Heart left ventricle (tissue), 16 donors: ENCODE measurements at regions of chr12 and their contacts with region 1.

Region 1: GRCh38 chr12:40911676-40912075 is 219.4 kb downstream of the CNTN1 start:
- DNase-seq: no peak
- ATAC-seq: no peak
- H3K4me3 ChIP-seq: no peak overlapping the region
- H3K27ac ChIP-seq: no peak overlapping the region
- H3K4me1 ChIP-seq: no peaks in the 10 kb centered on the region
- H3K27me3 ChIP-seq: no peaks in the 10 kb centered on the region
- CTCF ChIP-seq: no peak
- POLR2A ChIP-seq: no peak

Region 2: GRCh38 chr12:40622246-40622838 is 289.3 kb before region 1 on chr12:
- intact Hi-C with region 1: loop called in 1 of 10 experiments (anchors 10 kb)
- DNase-seq: peak in 1 of 5 donors; percentile 31
- ATAC-seq: no peak
- H3K4me3 ChIP-seq: no peak overlapping the region
- H3K27ac ChIP-seq: no peak overlapping the region
- H3K4me1 ChIP-seq: no peaks in the 10 kb centered on the region
- H3K27me3 ChIP-seq: no peaks in the 10 kb centered on the region
- CTCF ChIP-seq: peak; percentile 35 to 69 (median 56)
- POLR2A ChIP-seq: no peak

Region 3: GRCh38 chr12:40788276-40788675 is 123.4 kb before region 1 on chr12:
- intact Hi-C with region 1: no loop called
- DNase-seq: no peak
- ATAC-seq: no peak
- H3K4me3 ChIP-seq: no peak overlapping the region
- H3K27ac ChIP-seq: no peak overlapping the region
- H3K4me1 ChIP-seq: no peaks in the 10 kb centered on the region
- H3K27me3 ChIP-seq: no peaks in the 10 kb centered on the region
- CTCF ChIP-seq: no peak
- POLR2A ChIP-seq: no peak

Region 4: DNA sequence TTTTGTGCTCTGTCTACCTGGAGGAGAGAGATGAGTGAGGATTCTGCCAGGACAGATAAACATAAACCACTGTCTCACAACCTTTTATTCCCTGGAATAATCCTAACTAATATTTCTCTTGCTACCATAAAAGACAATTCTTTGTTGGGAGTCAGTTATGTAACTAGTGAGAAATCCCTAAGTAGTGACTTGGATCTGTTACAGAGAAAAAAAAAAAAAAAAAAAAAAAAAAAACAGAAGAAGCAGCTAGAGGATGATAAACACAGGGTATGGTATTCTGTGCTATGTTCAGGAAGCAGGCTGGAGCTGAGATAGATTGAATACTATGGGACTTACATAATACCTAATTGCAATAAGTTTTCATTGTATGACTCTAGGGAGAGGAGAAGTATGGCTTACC is 40.7 kb before region 1 on chr12:
- intact Hi-C with region 1: no loop called
- DNase-seq: no peak
- ATAC-seq: no peak
- H3K4me3 ChIP-seq: no peak overlapping the region
- H3K27ac ChIP-seq: no peak overlapping the region
- H3K4me1 ChIP-seq: no peaks in the 10 kb centered on the region
- H3K27me3 ChIP-seq: no peaks in the 10 kb centered on the region
- CTCF ChIP-seq: no peak
- POLR2A ChIP-seq: no peak

Region 5: GRCh38 chr12:40988824-40989223 is 77.1 kb after region 1 on chr12:
- intact Hi-C with region 1: no loop called
- DNase-seq: no peak
- ATAC-seq: no peak
- H3K4me3 ChIP-seq: no peak overlapping the region
- H3K27ac ChIP-seq: peak overlapping the region in 1 of 12 donors; percentile 77
- H3K4me1 ChIP-seq: no peaks in the 10 kb centered on the region
- H3K27me3 ChIP-seq: no peaks in the 10 kb centered on the region
- CTCF ChIP-seq: no peak
- POLR2A ChIP-seq: no peak